ENCODE measurements at regions of chr1 and their contacts with region 1.

Region 1: DNA sequence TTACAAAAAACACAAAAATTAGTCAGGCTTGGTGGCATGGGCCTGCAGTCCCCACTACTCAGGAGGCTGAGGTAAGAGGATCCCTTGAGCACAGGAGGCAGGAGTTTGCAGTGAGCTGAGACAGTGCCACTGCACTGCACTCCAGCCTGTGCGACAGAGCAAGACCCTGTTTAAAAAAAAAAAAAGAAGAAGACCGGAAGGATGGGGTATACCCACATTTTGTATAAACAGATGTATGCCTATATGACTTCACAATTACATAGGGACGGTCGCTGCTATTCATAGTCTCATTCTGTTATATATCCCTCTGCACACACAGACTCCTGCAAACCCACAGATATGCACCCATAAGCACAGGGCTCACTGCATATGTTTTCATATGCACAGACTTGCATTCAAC is 12.7 kb downstream of the LCK start:
- DNase-seq: no peak
- H3K4me3 ChIP-seq: no peak overlapping the region
- H3K27ac ChIP-seq: no peak overlapping the region
- H3K4me1 ChIP-seq: no peaks in the 10 kb centered on the region
- H3K27me3 ChIP-seq: no peaks in the 10 kb centered on the region
- CTCF ChIP-seq: no peak

Region 2: GRCh38 chr1:32234792-32235191 is 29.0 kb before region 1 on chr1:
- CTCF ChIA-PET with region 1: no interaction called
- POLR2A ChIA-PET with region 1: interaction called, 11 read pairs
- intact Hi-C with region 1: no loop called
- DNase-seq: no peak
- H3K4me3 ChIP-seq: no peak overlapping the region
- H3K27ac ChIP-seq: no peak overlapping the region
- H3K4me1 ChIP-seq: no peaks in the 10 kb centered on the region
- H3K27me3 ChIP-seq: no peaks in the 10 kb centered on the region
- CTCF ChIP-seq: no peak